ENCODE measurements at regions of chr11 and their contacts with region 1.

Region 1: GRCh38 chr11:60866911-60867870 is at the start of gene ZP1:
- DNase-seq: no peak
- ATAC-seq: peak; percentile 31; the same call in 1 of the 2 replicates
- H3K4me3 Mint-ChIP-seq: no peak within 1 kb of the TSS
- H3K27ac Mint-ChIP-seq: no peak within 1 kb of the TSS
- H3K4me1 Mint-ChIP-seq: no peaks in the 10 kb centered on the region
- H3K27me3 Mint-ChIP-seq: no peaks in the 10 kb centered on the region; the same call in 1 of the 2 replicates
- CTCF ChIP-seq: no peak
- total RNA-seq, gene ZP1: not detected in 3 replicates

Region 2: GRCh38 chr11:60899046-60899936 is 32.1 kb after region 1 on chr11:
- CTCF ChIA-PET with region 1: interaction called, 13 read pairs
- POLR2A ChIA-PET with region 1: no interaction called
- DNase-seq: peak; percentile 38
- ATAC-seq: peak; percentile 79
- H3K4me3 Mint-ChIP-seq: no peak overlapping the region
- H3K27ac Mint-ChIP-seq: no peak overlapping the region; the same call in 1 of the 2 replicates
- H3K4me1 Mint-ChIP-seq: peaks cover 4% of the 10 kb centered on the region
- H3K27me3 Mint-ChIP-seq: no peaks in the 10 kb centered on the region
- CTCF ChIP-seq: peak; percentile 80